CD14-positive monocyte (primary cell): ENCODE measurements at regions of chr1 and their contacts with region 1.

Region 1: GRCh38 chr1:1574721-1575537 is at the start of gene SSU72:
- DNase-seq: peak; percentile 92 to 94 (median 93)
- H3K4me3 ChIP-seq: peak within 1 kb of the TSS; percentile 82 to 91 (median 83)
- H3K4me3 Mint-ChIP-seq: peak within 1 kb of the TSS; percentile 93 to 94
- H3K27ac ChIP-seq: peak within 1 kb of the TSS; percentile 96 to 97
- H3K27ac Mint-ChIP-seq: peak within 1 kb of the TSS; percentile 98 to 99 (median 98)
- H3K4me1 ChIP-seq: peaks cover 19 to 22% of the 10 kb centered on the region in 2 donors
- H3K4me1 Mint-ChIP-seq: peaks cover 29% of the 10 kb centered on the region
- H3K27me3 ChIP-seq: peaks cover 0 to 5% of the 10 kb centered on the region in 2 donors
- H3K27me3 Mint-ChIP-seq: peaks cover 4 to 17% (median 9%) of the 10 kb centered on the region in 3 donors
- CTCF ChIP-seq: no peak
- polyA plus RNA-seq, gene SSU72: 88.1 to 168 (median 138) TPM

Region 2: GRCh38 chr1:1615256-1616044 is 40.5 kb after region 1 on chr1 and contains the start of gene MIB2:
- intact Hi-C with region 1: loop called (anchors 2 kb)
- DNase-seq: peak; percentile 97 to 99 (median 98)
- H3K4me3 ChIP-seq: peak within 1 kb of the TSS; percentile 87 to 92 (median 89)
- H3K4me3 Mint-ChIP-seq: peak within 1 kb of the TSS; percentile 90 to 94
- H3K27ac ChIP-seq: peak within 1 kb of the TSS; percentile 98
- H3K27ac Mint-ChIP-seq: peak within 1 kb of the TSS; percentile 95 to 98 (median 98)
- H3K4me1 ChIP-seq: peaks cover 26 to 33% of the 10 kb centered on the region in 2 donors
- H3K4me1 Mint-ChIP-seq: peaks cover 31% of the 10 kb centered on the region
- H3K27me3 ChIP-seq: no peaks in the 10 kb centered on the region
- H3K27me3 Mint-ChIP-seq: peaks cover 0 to 6% (median 0%) of the 10 kb centered on the region in 3 donors
- CTCF ChIP-seq: no peak
- polyA plus RNA-seq, gene MIB2: 5.4 to 65.7 (median 5.6) TPM

Region 3: DNA sequence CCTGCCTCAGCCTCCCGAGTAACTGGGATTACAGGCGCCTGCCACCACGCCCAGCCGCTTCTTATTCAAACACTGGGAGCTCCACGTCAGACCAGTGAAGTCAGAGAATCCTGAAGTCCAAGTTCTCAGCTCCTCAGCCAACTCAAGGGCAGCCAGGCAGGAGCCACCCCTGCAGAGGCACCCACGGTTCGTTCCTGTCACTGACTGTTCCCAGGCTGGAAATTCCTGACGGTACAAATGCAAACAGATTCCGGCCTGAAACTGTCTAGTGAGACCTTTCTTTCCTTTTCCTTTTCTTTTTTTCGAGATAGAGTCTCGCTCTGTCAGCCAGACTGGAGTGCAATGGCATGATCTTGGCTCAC is 106.0 kb after region 1 on chr1:
- intact Hi-C with region 1: loop called in 1 of 2 experiments (anchors 10 kb)
- DNase-seq: no peak
- H3K4me3 ChIP-seq: no peak overlapping the region
- H3K4me3 Mint-ChIP-seq: no peak overlapping the region
- H3K27ac ChIP-seq: no peak overlapping the region
- H3K27ac Mint-ChIP-seq: peak overlapping the region in 2 of 7 donors; percentile 31 to 62
- H3K4me1 ChIP-seq: peaks cover 3 to 5% of the 10 kb centered on the region in 2 donors
- H3K4me1 Mint-ChIP-seq: peaks cover 10% of the 10 kb centered on the region
- H3K27me3 ChIP-seq: no peaks in the 10 kb centered on the region
- H3K27me3 Mint-ChIP-seq: peaks cover 0 to 4% (median 0%) of the 10 kb centered on the region in 3 donors
- CTCF ChIP-seq: no peak